Esophagus muscularis mucosa (tissue), 4 donors: ENCODE measurements at regions of chr16 and their contacts with region 1.

Region 1: DNA sequence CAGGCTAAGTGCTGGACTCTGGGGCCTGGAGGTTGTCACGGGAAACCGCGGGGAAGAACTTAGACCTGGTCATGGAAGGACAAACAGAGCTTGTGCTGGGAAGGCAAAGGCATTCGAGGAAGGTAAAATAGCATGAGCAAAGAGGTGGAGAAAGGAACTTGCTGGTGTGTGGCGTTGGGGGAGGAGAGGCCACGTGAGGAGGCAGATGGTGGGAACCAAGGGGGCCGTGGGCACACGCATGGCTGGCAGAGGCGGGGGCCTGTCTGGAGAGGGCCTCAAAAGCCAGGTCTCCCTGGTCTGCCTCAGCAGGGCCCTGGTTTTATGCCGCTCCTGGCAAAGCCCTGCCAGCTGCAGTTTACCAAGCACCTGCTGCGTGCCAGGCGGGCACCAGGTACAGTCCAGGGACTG is 15.3 kb downstream of the CORO7 start:
- DNase-seq: no peak
- H3K4me3 ChIP-seq: no peak overlapping the region
- H3K27ac ChIP-seq: no peak overlapping the region
- H3K4me1 ChIP-seq: peaks cover 3 to 10% (median 7%) of the 10 kb centered on the region in 4 donors
- H3K27me3 ChIP-seq: no peaks in the 10 kb centered on the region
- CTCF ChIP-seq: no peak
- EP300 ChIP-seq: no peak
- POLR2A ChIP-seq: no peak

Region 2: GRCh38 chr16:4358831-4359561 is 42.1 kb before region 1 on chr16:
- intact Hi-C with region 1: loop called (anchors 1 kb)
- DNase-seq: no peak
- H3K4me3 ChIP-seq: no peak overlapping the region
- H3K27ac ChIP-seq: no peak overlapping the region
- H3K4me1 ChIP-seq: peaks cover 0 to 7% (median 3%) of the 10 kb centered on the region in 4 donors
- H3K27me3 ChIP-seq: no peaks in the 10 kb centered on the region
- CTCF ChIP-seq: peak; percentile 97 to 99 (median 97)
- EP300 ChIP-seq: no peak
- POLR2A ChIP-seq: no peak